Heart right ventricle (tissue), 16 donors: ENCODE measurements at regions of chr7 and their contacts with region 1.

Region 1: GRCh38 chr7:130922206-130923112 is 188.5 kb upstream of the KLF14 start:
- DNase-seq: no peak
- ATAC-seq: no peak
- H3K4me3 ChIP-seq: peak overlapping the region in 6 of 10 donors; percentile 20 to 49 (median 38)
- H3K27ac ChIP-seq: peak overlapping the region; percentile 78 to 89 (median 84)
- H3K4me1 ChIP-seq: peaks cover 0 to 92% (median 66%) of the 10 kb centered on the region in 9 donors
- H3K27me3 ChIP-seq: no peaks in the 10 kb centered on the region
- CTCF ChIP-seq: no peak

Region 2: DNA sequence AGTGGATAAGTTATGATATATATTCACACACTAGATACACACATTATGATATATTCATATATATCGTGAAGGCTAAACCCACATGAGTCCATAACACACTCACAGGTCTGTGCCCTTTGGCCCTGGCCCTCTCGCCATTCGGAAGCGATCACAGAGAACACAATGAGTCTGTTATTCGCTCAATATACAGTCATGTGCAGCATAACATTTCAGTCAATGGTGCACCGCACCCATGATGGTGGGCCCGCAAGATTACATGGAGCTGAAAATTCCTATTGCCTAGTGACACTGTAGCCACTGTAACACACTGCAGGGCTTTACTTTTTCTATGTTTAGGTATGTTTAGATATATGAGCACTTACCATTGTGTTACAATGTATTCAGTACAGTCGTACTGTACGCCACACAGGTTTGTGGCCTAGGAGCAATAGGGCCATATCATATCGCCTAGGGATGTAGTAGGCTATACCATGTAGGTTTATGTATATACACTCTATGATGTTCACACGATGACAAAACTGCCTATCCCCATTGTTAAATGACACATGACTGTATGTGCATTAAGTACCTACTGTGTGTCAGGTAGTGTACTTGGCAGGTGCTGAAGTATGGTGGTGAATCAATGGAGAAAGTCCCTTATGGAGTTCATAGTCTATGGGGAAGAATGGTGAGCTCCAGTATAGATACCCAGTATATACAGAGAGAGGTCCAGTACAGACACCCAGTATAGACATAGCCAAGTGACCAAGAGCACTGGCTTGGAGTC is 10.4 kb after region 1 on chr7:
- intact Hi-C with region 1: loop called in 1 of 10 experiments (anchors 1 kb)
- DNase-seq: no peak
- ATAC-seq: no peak
- H3K4me3 ChIP-seq: no peak overlapping the region
- H3K27ac ChIP-seq: no peak overlapping the region
- H3K4me1 ChIP-seq: peaks cover 0 to 50% (median 27%) of the 10 kb centered on the region in 9 donors
- H3K27me3 ChIP-seq: no peaks in the 10 kb centered on the region
- CTCF ChIP-seq: no peak

Region 3: DNA sequence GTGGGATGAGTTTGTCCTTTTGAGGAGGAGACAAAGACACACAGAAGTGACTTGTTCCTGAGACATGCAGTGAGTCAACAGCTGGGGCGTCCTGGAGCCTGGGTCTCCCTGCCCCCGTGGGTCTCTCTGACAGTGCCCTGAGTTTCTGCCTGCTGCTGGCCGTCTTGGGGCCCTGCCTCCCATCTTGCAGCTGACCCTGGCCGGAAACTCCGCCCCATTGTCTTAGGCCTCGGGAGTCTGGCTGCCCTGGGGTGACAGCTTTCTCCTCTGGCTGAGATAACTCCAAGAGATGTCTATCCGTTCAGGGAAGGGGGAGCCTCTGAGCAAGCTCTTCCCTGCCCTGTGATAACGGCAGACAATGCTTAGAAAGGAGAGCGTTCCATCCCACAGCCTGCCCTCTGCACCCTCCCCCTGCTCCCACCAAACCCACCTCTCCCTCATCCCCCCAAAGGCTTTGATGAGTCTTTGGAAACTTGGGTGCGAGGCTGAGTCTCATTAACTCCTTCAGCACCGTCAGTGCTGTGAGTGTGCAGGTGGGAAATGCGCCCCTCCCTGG is 703.4 kb after region 1 on chr7:
- intact Hi-C with region 1: no loop called
- DNase-seq: peak; percentile 53 to 73
- ATAC-seq: peak; percentile 23 to 64 (median 44)
- H3K4me3 ChIP-seq: no peak overlapping the region
- H3K27ac ChIP-seq: peak overlapping the region in 9 of 10 donors; percentile 56 to 87 (median 68)
- H3K4me1 ChIP-seq: peaks cover 38 to 100% (median 77%) of the 10 kb centered on the region in 9 donors
- H3K27me3 ChIP-seq: no peaks in the 10 kb centered on the region
- CTCF ChIP-seq: peak in 3 of 9 donors; percentile 7 to 17 (median 12)